Right cardiac atrium (tissue), 5 donors: ENCODE measurements at regions of chr18 and their contacts with region 1.

Region 1: DNA sequence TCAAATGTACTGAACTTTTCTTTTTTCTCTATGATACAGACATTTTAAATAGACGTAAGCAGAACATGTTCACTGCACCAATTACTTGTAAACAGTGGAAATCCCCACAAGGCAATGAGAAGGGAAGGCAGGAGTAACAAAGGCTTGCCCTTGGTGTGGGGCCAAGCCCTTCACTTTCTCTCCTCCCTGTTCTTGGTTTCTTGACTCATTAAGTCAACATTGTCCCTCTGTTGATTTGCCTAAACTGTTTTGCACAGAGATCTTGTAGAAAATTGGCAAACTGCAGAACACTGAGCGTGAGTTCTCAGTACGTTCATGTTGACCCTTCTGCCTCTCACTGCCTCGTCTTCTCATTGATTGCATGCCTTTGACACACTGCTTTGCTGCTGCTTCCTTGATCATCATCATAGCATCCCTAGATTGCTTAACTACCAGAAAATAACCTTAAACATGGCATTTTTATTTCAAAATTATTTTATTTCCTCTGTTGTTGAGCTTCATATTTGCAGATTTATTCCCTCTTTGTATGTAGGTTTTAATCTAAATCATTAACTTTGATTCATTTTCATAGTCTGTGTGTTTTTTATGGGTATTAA is 257.7 kb downstream of the PTGR3 start:
- DNase-seq: peak; percentile 56 to 80 (median 61)
- ATAC-seq: peak; percentile 92 to 97
- H3K4me3 ChIP-seq: no peak overlapping the region
- H3K27ac ChIP-seq: no peak overlapping the region
- H3K4me1 ChIP-seq: peaks cover 6% of the 10 kb centered on the region
- H3K27me3 ChIP-seq: no peaks in the 10 kb centered on the region

Region 2: GRCh38 chr18:74225193-74225840 is 725.9 kb before region 1 on chr18:
- intact Hi-C with region 1: loop called in 1 of 4 experiments (anchors 10 kb)
- DNase-seq: no peak
- ATAC-seq: no peak
- H3K4me3 ChIP-seq: no peak overlapping the region
- H3K27ac ChIP-seq: no peak overlapping the region
- H3K4me1 ChIP-seq: no peaks in the 10 kb centered on the region
- H3K27me3 ChIP-seq: no peaks in the 10 kb centered on the region

Region 3: GRCh38 chr18:74795751-74796150 is 155.5 kb before region 1 on chr18:
- intact Hi-C with region 1: no loop called
- DNase-seq: no peak
- ATAC-seq: no peak
- H3K4me3 ChIP-seq: no peak overlapping the region
- H3K27ac ChIP-seq: no peak overlapping the region
- H3K4me1 ChIP-seq: no peaks in the 10 kb centered on the region
- H3K27me3 ChIP-seq: no peaks in the 10 kb centered on the region

Region 4: GRCh38 chr18:75097491-75098225 is 146.4 kb after region 1 on chr18:
- intact Hi-C with region 1: no loop called
- DNase-seq: no peak
- ATAC-seq: no peak
- H3K4me3 ChIP-seq: no peak overlapping the region
- H3K27ac ChIP-seq: no peak overlapping the region
- H3K4me1 ChIP-seq: no peaks in the 10 kb centered on the region
- H3K27me3 ChIP-seq: no peaks in the 10 kb centered on the region